ENCODE measurements at regions of chr1 and their contacts with region 1.

Region 1: GRCh38 chr1:235910357-235911299 is 43.9 kb upstream of the LYST start:
- DNase-seq: peak; percentile 69
- H3K4me3 Mint-ChIP-seq: peak overlapping the region; percentile 18
- H3K27ac Mint-ChIP-seq: peak overlapping the region; percentile 84
- H3K4me1 Mint-ChIP-seq: peaks cover 33% of the 10 kb centered on the region
- H3K27me3 Mint-ChIP-seq: peaks cover 4% of the 10 kb centered on the region

Region 2: GRCh38 chr1:235954306-235955283 is 44.0 kb after region 1 on chr1:
- intact Hi-C with region 1: loop called (anchors 1 kb)
- DNase-seq: peak; percentile 78
- H3K4me3 Mint-ChIP-seq: no peak overlapping the region
- H3K27ac Mint-ChIP-seq: no peak overlapping the region
- H3K4me1 Mint-ChIP-seq: peaks cover 37% of the 10 kb centered on the region
- H3K27me3 Mint-ChIP-seq: peaks cover 2% of the 10 kb centered on the region

Region 3: DNA sequence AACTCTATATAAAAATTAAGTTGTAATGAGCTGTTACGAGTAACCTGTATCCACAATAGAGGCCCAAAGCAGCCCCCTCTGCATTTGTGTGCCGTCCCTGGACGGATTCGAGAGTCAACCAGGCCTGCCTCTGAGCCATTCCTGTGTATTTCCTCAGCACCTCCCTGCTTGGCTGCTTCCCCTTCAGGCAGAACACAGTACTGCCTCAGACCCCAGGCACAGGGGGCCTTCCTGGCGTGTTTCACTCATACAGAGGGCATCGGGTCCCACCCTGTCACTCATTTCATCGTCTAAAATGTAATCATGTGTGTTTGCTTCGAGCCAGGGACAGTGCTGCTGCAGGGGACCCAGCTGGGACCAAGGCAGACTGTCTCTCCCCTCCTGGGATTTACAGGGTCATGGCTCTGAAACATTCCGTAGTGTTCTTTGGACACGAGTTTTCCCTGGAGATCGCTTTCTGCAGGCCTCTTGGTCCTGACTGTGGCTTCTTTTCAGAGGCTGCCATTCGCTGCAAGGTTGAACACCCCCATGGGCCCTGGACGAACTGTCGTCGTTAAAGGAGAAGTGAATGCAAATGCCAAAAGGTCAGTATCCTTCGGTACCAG is 632.5 kb after region 1 on chr1:
- intact Hi-C with region 1: no loop called
- DNase-seq: no peak
- H3K4me3 Mint-ChIP-seq: no peak overlapping the region
- H3K27ac Mint-ChIP-seq: no peak overlapping the region
- H3K4me1 Mint-ChIP-seq: peaks cover 20% of the 10 kb centered on the region
- H3K27me3 Mint-ChIP-seq: no peaks in the 10 kb centered on the region

Measured in activated CD4-positive, alpha-beta T cell treated with anti-CD3 and anti-CD28 coated beads, Interleukin-2, amount 10 ng/mL, durations not matched to agents 24 days and 14 days (primary cell).